ENCODE measurements at regions of chr7 and their contacts with region 1.

Region 1: DNA sequence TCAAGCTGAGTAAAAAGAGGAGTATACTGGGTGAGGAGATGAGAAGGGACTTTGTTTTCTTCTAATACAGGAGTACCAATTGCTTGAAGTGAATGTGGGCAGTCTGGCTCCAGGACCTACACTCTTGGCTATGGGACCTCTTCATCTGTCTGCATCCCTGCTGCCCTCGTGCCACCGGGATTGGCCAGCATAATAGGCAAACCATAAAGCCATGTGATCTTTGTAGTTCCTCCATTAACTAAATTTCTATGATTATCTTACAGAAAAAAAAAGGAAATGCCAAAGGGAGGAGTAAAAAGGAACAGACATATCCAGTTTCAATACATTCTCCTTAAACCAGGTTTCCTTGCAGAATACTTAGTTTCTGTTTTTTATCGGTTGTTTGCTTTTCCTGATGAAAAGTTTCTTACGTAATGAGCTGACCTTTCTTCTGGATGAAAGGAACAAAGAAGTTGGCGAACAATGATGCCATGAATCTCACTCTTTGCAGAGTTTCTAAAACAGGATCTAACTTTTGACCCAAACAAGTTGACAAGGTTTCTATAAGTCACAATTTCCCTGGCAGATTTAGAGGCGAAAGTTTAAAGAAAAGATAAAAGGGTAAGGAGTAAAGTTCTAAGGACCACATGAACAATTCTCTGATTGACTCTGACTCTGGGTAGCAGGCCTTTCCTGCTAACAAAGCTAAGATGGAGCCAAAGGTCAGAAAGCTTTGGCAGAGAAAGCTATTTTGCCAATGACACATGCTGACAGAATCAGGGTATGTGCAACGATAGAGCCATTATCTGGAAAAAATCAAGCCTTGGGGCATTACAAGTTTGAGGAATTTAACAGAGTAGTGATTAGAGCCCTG is 54.1 kb downstream of the LAMB1 start:
- DNase-seq: peak; percentile 90
- H3K4me3 Mint-ChIP-seq: peak overlapping the region; percentile 37
- H3K27ac Mint-ChIP-seq: peak overlapping the region; percentile 85
- H3K4me1 Mint-ChIP-seq: peaks cover 47% of the 10 kb centered on the region
- H3K27me3 Mint-ChIP-seq: no peaks in the 10 kb centered on the region
- CTCF ChIP-seq: no peak

Region 2: DNA sequence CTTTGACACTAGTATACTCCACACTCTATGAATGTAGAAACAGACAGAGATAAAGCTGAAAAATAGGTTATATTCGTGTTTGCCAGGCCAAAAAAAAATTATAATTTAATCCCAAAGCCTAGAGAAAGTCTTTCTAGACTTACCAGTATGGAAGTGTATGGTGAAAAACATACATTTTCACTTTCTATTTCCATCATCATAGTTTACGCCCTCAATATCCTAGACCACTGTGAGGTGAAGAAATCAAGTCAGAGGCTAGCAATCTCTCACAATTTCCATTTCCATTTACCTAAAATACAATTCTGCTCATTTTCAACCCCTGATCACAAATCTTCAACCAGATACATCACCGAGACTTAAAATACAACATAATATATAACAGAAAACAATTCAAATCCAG is 462.8 kb before region 1 on chr7:
- CTCF ChIA-PET with region 1: no interaction called
- POLR2A ChIA-PET with region 1: no interaction called
- intact Hi-C with region 1: no loop called
- DNase-seq: no peak
- H3K4me3 Mint-ChIP-seq: no peak overlapping the region
- H3K27ac Mint-ChIP-seq: no peak overlapping the region
- H3K4me1 Mint-ChIP-seq: no peaks in the 10 kb centered on the region
- H3K27me3 Mint-ChIP-seq: no peaks in the 10 kb centered on the region
- CTCF ChIP-seq: no peak

Region 3: DNA sequence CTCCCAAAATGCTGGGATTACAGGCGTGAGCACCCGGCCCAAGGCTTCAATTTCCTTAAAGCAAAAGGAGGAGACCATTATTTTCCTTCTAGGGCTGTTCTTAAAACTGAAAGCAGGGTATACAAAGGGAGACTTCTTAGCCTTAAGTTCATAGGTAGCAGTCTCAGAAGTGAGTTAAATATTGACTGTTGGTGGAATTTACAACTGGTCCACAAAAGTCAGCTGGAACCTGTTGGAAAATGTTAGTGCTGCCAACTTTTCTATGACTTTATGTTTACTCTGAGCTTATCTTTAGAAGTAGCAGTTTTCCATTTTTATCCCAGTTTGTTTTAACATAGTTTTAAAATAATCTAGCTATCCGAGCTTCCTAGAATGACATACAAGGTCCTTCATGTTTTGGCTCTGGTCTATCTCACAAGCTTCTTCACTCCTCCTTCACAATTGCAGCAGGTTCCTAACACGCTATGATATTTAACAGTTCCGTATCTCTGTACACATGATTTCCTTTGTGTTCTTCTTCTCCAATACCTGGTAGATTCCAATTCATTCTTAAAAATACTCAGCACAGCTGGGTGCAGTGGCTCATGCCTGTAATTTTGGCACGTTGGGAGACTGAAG is 149.1 kb before region 1 on chr7:
- CTCF ChIA-PET with region 1: no interaction called
- POLR2A ChIA-PET with region 1: no interaction called
- intact Hi-C with region 1: no loop called
- DNase-seq: no peak
- H3K4me3 Mint-ChIP-seq: no peak overlapping the region
- H3K27ac Mint-ChIP-seq: no peak overlapping the region
- H3K4me1 Mint-ChIP-seq: no peaks in the 10 kb centered on the region
- H3K27me3 Mint-ChIP-seq: peaks cover 58% of the 10 kb centered on the region
- CTCF ChIP-seq: no peak

Region 4: GRCh38 chr7:107924841-107925504 is 23.9 kb before region 1 on chr7:
- CTCF ChIA-PET with region 1: no interaction called
- POLR2A ChIA-PET with region 1: interaction called, 19 read pairs
- intact Hi-C with region 1: no loop called
- DNase-seq: peak; percentile 74
- H3K4me3 Mint-ChIP-seq: no peak overlapping the region
- H3K27ac Mint-ChIP-seq: peak overlapping the region; percentile 73
- H3K4me1 Mint-ChIP-seq: peaks cover 15% of the 10 kb centered on the region
- H3K27me3 Mint-ChIP-seq: no peaks in the 10 kb centered on the region
- CTCF ChIP-seq: no peak

Region 5: GRCh38 chr7:107958764-107959526 is 10.1 kb after region 1 on chr7:
- CTCF ChIA-PET with region 1: interaction called, 6 read pairs
- POLR2A ChIA-PET with region 1: interaction called, 337 read pairs
- intact Hi-C with region 1: no loop called
- DNase-seq: peak; percentile 92
- H3K4me3 Mint-ChIP-seq: no peak overlapping the region
- H3K27ac Mint-ChIP-seq: peak overlapping the region; percentile 91
- H3K4me1 Mint-ChIP-seq: peaks cover 27% of the 10 kb centered on the region
- H3K27me3 Mint-ChIP-seq: no peaks in the 10 kb centered on the region
- CTCF ChIP-seq: no peak

Region 6: DNA sequence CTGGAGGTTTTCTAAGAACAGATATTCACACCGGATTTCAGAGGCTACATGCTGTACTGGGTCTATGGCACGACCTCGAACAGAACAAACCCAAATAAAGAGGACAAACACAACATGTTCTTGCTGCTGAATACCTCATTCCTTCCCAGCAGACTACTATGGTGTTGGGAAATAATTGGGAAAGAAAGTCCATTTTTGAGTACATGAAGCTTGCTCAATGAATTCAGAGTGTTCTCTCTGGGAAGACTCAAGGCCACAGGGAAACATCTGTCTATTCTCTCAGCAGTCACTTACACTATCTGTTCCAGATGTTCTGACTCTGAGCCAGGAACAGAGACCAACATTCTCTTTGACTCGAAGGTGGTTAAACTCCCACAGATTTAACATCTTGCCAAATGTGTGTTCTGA is 23.2 kb after region 1 on chr7:
- CTCF ChIA-PET with region 1: interaction called, 6 read pairs
- POLR2A ChIA-PET with region 1: interaction called, 337 read pairs
- intact Hi-C with region 1: no loop called
- DNase-seq: peak; percentile 91
- H3K4me3 Mint-ChIP-seq: peak overlapping the region; percentile 36
- H3K27ac Mint-ChIP-seq: peak overlapping the region; percentile 88
- H3K4me1 Mint-ChIP-seq: peaks cover 36% of the 10 kb centered on the region
- H3K27me3 Mint-ChIP-seq: no peaks in the 10 kb centered on the region
- CTCF ChIP-seq: no peak

Region 7: GRCh38 chr7:108071551-108071950 is 122.7 kb after region 1 on chr7:
- CTCF ChIA-PET with region 1: no interaction called
- POLR2A ChIA-PET with region 1: no interaction called
- intact Hi-C with region 1: no loop called
- DNase-seq: no peak
- H3K4me3 Mint-ChIP-seq: no peak overlapping the region
- H3K27ac Mint-ChIP-seq: no peak overlapping the region
- H3K4me1 Mint-ChIP-seq: peaks cover 9% of the 10 kb centered on the region
- H3K27me3 Mint-ChIP-seq: no peaks in the 10 kb centered on the region
- CTCF ChIP-seq: no peak

Region 8: GRCh38 chr7:108094933-108095710 is 146.3 kb after region 1 on chr7:
- CTCF ChIA-PET with region 1: no interaction called
- POLR2A ChIA-PET with region 1: no interaction called
- intact Hi-C with region 1: loop called (anchors 5 kb)
- DNase-seq: peak; percentile 85
- H3K4me3 Mint-ChIP-seq: no peak overlapping the region
- H3K27ac Mint-ChIP-seq: no peak overlapping the region
- H3K4me1 Mint-ChIP-seq: peaks cover 16% of the 10 kb centered on the region
- H3K27me3 Mint-ChIP-seq: peaks cover 10% of the 10 kb centered on the region
- CTCF ChIP-seq: no peak

Region 9: GRCh38 chr7:108235451-108236061 is 286.7 kb after region 1 on chr7:
- CTCF ChIA-PET with region 1: no interaction called
- POLR2A ChIA-PET with region 1: no interaction called
- intact Hi-C with region 1: no loop called
- DNase-seq: no peak
- H3K4me3 Mint-ChIP-seq: no peak overlapping the region
- H3K27ac Mint-ChIP-seq: no peak overlapping the region
- H3K4me1 Mint-ChIP-seq: peaks cover 21% of the 10 kb centered on the region
- H3K27me3 Mint-ChIP-seq: no peaks in the 10 kb centered on the region
- CTCF ChIP-seq: no peak

Measured in MCF 10A (cell line).